Cardiac septum (tissue), 1 donor: ENCODE measurements at regions of chr1 and their contacts with region 1.

Region 1: GRCh38 chr1:209860293-209860881 is 32.6 kb downstream of the UTP25 start:
- DNase-seq: no peak

Region 2: DNA sequence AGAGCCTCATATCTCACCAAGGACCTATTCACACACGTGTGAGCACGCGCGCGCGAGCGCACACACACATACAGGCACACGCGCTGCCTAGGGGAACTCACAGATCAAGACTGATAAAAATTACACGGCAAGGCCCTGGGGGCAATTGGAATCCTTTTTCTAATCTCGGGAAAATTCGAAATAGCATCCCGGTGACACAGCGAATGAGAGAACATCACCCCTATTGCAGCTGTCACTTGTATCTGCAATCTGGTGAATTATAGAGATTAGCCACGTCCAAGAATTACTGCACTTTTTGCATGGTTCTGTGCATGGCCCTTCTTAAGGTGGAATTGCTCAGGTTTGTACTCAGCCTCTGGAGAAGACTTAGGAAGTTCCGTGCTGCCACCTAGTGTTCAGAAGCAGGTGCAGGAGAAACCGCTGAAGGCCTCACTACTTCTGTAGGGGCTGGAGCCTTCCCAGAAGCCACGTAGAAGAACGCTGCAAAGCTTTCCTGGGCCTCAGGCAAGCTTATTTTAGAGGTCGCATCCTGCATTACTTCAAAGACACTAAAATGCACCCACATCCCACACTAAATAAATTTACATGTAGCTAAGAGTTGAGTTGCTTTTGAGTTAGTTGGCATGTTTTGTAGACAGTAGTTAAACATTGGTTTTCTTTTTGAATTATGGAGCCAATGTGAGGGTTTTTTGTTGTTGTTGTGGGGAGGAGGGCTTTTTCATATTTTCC is 506.1 kb before region 1 on chr1:
- intact Hi-C with region 1: no loop called
- DNase-seq: peak; percentile 77

Region 3: DNA sequence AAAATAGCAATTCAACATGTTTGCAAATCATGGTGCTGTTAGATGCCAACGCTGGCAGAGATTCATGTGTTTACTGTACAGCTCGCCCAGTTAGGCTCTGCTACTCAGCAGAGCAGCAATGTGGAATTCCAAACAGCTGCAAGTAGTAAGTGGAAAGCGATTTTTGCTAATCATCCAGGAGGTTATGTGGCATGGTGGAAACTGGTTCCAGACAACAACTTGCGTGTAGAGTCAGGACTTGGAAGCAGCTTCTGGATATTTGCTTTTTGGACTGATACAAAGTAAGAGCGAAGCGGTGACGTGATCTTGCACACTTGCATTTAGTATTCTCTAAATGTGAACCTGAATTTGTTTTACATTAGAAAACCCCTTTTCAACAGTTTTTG is 441.2 kb after region 1 on chr1:
- intact Hi-C with region 1: loop called (anchors 10 kb)
- DNase-seq: no peak